ENCODE measurements at regions of chr17 and their contacts with region 1.

Region 1: DNA sequence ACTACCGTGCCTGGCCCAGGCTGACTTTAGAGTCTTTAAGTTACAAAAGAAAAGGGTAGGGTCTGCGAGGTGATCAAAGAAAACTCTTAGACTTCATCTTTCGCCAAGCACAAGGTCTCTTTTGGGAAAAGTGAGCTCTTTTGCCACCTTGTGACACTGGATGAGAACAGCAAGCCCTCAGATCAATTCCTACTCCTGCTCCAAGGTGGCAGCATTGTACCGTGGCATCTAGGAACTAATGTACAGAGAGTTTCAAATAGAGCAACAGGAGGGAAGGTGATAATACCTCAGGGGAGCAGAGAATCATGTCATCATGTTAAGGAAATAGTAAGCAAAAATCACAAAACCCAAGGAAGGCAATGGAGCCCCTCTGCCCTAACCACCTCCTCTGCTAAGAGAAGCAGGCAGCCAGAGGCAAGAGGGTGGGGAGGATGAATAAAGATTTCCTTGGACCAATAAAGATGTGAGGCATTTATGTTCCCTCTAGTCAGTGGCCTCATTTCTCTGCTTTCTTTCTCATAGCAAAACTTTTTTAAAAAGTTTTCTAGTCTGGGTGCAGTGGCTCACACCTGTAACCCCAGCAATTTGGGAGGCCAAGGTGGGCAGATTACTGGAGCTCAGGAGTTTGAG is 2.1 kb upstream of the C17orf78 start:
- DNase-seq: no peak
- H3K4me3 ChIP-seq: no peak overlapping the region
- H3K27me3 ChIP-seq: no peaks in the 10 kb centered on the region
- CTCF ChIP-seq: peak; percentile 99

Region 2: GRCh38 chr17:37358830-37359681 is 14.6 kb before region 1 on chr17:
- CTCF ChIA-PET with region 1: interaction called, 16 read pairs
- POLR2A ChIA-PET with region 1: no interaction called
- DNase-seq: peak; percentile 59
- H3K4me3 ChIP-seq: peak overlapping the region; percentile 85
- H3K27me3 ChIP-seq: no peaks in the 10 kb centered on the region
- CTCF ChIP-seq: peak; percentile 12; the same call in 1 of the 2 replicates

Region 3: GRCh38 chr17:37392024-37392590 is 18.5 kb after region 1 on chr17:
- CTCF ChIA-PET with region 1: interaction called, 28 read pairs
- POLR2A ChIA-PET with region 1: no interaction called
- DNase-seq: no peak
- H3K4me3 ChIP-seq: no peak overlapping the region
- H3K27me3 ChIP-seq: no peaks in the 10 kb centered on the region
- CTCF ChIP-seq: no peak

Region 4: GRCh38 chr17:37570527-37571093 is 197.0 kb after region 1 on chr17:
- CTCF ChIA-PET with region 1: interaction called, 10 read pairs
- POLR2A ChIA-PET with region 1: no interaction called
- DNase-seq: no peak
- H3K4me3 ChIP-seq: no peak overlapping the region
- H3K27me3 ChIP-seq: no peaks in the 10 kb centered on the region
- CTCF ChIP-seq: peak; percentile 66

Region 5: DNA sequence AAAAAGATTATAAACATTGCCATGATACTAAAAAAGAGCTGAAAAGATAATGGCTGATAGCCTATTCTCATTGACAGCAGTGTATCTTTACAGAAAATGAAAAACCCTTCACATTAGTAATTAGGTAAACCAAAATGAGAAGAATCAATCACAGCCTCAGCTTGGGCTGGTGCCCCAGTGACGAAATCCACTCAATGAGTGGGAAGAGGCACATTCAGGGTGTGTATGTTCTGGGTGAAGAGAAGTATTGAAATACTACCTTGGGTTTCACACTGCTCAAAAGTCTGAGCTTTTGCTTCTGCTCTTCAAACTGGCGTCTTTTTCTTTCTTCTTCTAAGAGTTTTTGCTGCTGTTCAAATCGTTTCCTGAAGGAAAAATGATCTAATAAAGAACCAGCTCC is 211.4 kb after region 1 on chr17:
- CTCF ChIA-PET with region 1: no interaction called
- POLR2A ChIA-PET with region 1: no interaction called
- DNase-seq: no peak
- H3K4me3 ChIP-seq: no peak overlapping the region
- H3K27me3 ChIP-seq: no peaks in the 10 kb centered on the region
- CTCF ChIP-seq: no peak

Region 6: DNA sequence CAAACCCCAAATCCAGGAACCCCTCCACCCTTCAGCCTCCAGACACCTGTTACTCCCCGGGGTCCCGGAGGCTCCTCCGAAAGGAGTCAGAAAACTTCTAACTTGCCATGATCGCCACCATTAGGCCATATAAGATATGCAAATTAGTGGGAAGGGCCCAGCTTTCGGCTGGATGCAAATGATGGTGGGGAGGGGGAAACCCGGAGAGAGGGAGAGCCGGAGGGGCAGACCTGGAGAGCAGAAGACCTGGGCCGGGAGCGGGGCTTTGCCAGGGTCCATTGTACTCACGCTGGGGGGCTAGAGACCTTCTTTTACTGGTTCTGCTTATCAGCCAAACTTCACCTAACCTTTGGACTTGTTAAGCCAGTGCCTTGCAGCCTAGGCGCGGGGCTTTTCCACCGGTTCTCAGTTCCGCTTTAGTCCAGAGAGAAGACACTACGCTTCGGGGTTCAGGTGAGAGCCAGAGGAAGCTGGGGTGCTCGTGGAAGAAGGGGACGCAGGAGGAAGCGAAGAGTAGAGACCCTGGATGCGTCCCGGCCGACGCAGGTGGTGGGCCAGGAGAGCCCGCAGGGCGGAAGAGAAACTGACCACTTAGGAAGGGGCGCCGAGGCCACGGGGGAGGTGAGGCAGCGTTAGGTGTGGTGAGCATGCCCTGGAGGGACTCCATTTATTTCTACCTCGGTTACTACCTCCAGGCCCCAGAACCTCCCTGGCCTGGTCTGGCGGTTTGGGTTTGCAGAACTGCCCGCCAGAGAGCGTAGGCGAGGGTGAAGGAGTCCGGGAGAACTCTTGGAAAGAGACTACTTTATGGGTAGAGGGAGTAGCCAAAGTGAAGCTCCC is 371.5 kb after region 1 on chr17 and contains the start of gene HNF1B:
- CTCF ChIA-PET with region 1: no interaction called
- POLR2A ChIA-PET with region 1: no interaction called
- DNase-seq: no peak
- H3K4me3 ChIP-seq: no peak within 1 kb of the TSS
- H3K27me3 ChIP-seq: peaks cover 50% of the 10 kb centered on the region
- CTCF ChIP-seq: no peak
- polyA plus RNA-seq, gene HNF1B: not detected in 2 replicates

Measured in BJ (cell line).